ENCODE measurements at regions of chr19 and their contacts with region 1.

Region 1: DNA sequence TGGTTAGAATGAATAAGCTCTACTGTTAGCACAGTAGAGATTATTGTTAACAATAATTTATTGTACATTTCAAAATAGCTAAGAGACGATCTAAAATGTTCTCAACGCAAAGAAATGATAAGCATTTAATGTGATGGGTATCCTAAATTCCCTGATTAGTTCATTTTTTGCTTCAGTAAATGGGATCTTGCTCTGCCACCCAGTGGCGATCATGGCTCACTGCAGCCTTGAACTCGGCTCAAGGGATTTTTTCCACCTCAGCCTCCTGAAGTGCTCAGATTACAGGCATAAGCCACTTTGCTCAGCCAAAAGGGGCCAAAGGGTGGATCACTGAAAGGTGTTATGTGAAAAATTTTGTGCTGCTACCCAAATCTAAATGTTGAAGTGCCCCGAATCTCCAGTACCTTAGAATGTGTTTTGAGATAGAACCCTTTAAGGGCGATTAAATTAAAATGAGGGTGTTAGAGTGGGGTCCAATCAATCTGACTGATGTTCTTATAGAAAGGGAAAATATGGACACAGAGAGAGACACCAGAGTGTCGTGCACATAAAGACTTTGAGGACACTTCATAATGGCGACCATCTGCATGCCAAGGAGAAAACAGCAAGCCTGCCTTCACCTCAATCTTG is 31.5 kb upstream of the ZNF766 start:
- DNase-seq: peak in 1 of 2 experiments; percentile 67
- H3K4me3 ChIP-seq: no peak overlapping the region
- H3K27ac ChIP-seq: no peak overlapping the region
- H3K4me1 ChIP-seq: no peaks in the 10 kb centered on the region
- H3K27me3 ChIP-seq: no peaks in the 10 kb centered on the region
- CTCF ChIP-seq: peak; percentile 71 to 89 (median 74)
- EP300 ChIP-seq: no peak
- POLR2A ChIP-seq: no peak
- RAD21 ChIP-seq: peak; percentile 81 to 85

Region 2: GRCh38 chr19:52227196-52227940 is 10.5 kb before region 1 on chr19:
- CTCF ChIA-PET with region 1: interaction called, 16 read pairs
- POLR2A ChIA-PET with region 1: interaction called, 5 read pairs
- DNase-seq: no peak
- H3K4me3 ChIP-seq: no peak overlapping the region
- H3K27ac ChIP-seq: no peak overlapping the region
- H3K4me1 ChIP-seq: no peaks in the 10 kb centered on the region
- H3K27me3 ChIP-seq: no peaks in the 10 kb centered on the region
- CTCF ChIP-seq: no peak
- EP300 ChIP-seq: no peak
- POLR2A ChIP-seq: no peak
- RAD21 ChIP-seq: no peak

Region 3: GRCh38 chr19:52248241-52248640 is 10.4 kb after region 1 on chr19:
- CTCF ChIA-PET with region 1: interaction called, 10 read pairs
- POLR2A ChIA-PET with region 1: interaction called, 5 read pairs
- DNase-seq: peak in 1 of 2 experiments; percentile 56
- H3K4me3 ChIP-seq: no peak overlapping the region
- H3K27ac ChIP-seq: no peak overlapping the region
- H3K4me1 ChIP-seq: no peaks in the 10 kb centered on the region
- H3K27me3 ChIP-seq: no peaks in the 10 kb centered on the region
- CTCF ChIP-seq: peak; percentile 7 to 63 (median 59)
- EP300 ChIP-seq: no peak
- POLR2A ChIP-seq: no peak
- RAD21 ChIP-seq: peak; percentile 77 to 84

Region 4: GRCh38 chr19:52275988-52276387 is 38.1 kb after region 1 on chr19:
- CTCF ChIA-PET with region 1: no interaction called
- POLR2A ChIA-PET with region 1: no interaction called
- DNase-seq: no peak
- H3K4me3 ChIP-seq: no peak overlapping the region
- H3K27ac ChIP-seq: no peak overlapping the region
- H3K4me1 ChIP-seq: peaks cover 0 to 3% (median 0%) of the 10 kb centered on the region in 4 experiments; a peak in 2 of 7 replicates
- H3K27me3 ChIP-seq: no peaks in the 10 kb centered on the region
- CTCF ChIP-seq: no peak
- EP300 ChIP-seq: no peak
- POLR2A ChIP-seq: no peak
- RAD21 ChIP-seq: no peak

Measured in H1 (cell line).